Activated CD4-positive, alpha-beta memory T cell treated with anti-CD3 and anti-CD28 coated beads, Interleukin-2, amount 10 ng/mL, durations not matched to agents 7 days and 5 days (primary cell): ENCODE measurements at regions of chr16 and their contacts with region 1.

Region 1: DNA sequence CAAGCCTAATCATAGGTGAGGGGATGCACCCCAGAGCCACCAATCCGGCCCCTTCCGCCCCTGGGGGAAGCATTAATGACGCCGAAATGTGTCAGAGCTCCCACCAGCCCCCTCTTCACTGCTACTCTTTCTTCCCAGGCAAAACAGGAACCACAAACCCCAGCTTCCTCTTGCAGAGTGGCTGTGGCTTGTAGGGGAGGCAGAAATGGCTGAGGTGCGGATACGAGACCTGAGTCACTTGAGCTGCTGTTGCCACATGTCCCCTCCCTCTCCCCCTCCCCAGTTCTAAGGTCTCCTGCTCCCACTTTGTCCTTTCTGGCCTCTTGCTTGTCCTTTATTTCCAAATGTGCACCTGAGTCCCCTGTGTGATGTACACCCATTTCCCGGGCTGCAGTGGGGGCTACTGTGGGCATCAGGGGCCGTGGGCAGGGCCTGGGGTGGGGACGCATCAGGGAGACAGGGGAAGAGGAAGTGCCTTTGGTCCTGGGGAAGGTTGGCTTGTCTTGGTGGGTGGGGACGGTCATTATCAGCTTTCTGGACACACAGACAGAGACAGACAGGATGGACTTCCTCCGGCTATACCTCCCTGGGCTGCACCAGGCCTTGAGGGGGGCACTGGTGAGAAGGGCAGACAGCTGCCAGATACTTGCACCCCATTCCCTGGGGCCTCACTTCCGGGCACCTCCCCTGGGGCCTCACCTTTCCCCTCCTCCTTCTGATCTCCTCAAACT is at the start of gene APOBR:
- DNase-seq: peak; percentile 92
- H3K4me3 Mint-ChIP-seq: peak within 1 kb of the TSS; percentile 97
- H3K27ac Mint-ChIP-seq: peak within 1 kb of the TSS; percentile 98
- H3K4me1 Mint-ChIP-seq: peaks cover 63% of the 10 kb centered on the region
- H3K27me3 Mint-ChIP-seq: no peaks in the 10 kb centered on the region
- total RNA-seq, gene APOBR: 20.9 TPM

Region 2: DNA sequence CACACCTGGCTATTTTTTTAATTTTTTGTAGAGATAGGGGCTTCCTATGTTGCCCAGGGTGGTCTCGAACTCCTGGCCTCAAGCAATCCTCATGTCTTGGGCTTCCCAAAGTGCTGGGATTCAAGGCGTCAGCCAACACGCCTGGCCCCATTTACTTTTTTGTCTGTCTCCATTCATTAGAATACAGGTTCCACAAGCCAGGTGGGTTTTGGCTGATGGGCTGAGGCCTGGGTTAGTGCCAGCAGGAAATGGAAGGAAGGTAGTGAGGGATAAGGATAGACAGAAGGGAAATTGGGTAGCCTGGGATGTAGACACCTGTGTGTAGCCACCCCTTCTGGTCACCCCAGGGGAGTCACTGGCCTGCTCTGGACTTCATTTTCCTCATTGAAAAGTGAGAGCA is 16.7 kb after region 1 on chr16:
- CTCF ChIA-PET with region 1: no interaction called
- POLR2A ChIA-PET with region 1: no interaction called
- DNase-seq: no peak
- H3K4me3 Mint-ChIP-seq: no peak overlapping the region
- H3K27ac Mint-ChIP-seq: no peak overlapping the region
- H3K4me1 Mint-ChIP-seq: peaks cover 18% of the 10 kb centered on the region
- H3K27me3 Mint-ChIP-seq: peaks cover 8% of the 10 kb centered on the region

Region 3: DNA sequence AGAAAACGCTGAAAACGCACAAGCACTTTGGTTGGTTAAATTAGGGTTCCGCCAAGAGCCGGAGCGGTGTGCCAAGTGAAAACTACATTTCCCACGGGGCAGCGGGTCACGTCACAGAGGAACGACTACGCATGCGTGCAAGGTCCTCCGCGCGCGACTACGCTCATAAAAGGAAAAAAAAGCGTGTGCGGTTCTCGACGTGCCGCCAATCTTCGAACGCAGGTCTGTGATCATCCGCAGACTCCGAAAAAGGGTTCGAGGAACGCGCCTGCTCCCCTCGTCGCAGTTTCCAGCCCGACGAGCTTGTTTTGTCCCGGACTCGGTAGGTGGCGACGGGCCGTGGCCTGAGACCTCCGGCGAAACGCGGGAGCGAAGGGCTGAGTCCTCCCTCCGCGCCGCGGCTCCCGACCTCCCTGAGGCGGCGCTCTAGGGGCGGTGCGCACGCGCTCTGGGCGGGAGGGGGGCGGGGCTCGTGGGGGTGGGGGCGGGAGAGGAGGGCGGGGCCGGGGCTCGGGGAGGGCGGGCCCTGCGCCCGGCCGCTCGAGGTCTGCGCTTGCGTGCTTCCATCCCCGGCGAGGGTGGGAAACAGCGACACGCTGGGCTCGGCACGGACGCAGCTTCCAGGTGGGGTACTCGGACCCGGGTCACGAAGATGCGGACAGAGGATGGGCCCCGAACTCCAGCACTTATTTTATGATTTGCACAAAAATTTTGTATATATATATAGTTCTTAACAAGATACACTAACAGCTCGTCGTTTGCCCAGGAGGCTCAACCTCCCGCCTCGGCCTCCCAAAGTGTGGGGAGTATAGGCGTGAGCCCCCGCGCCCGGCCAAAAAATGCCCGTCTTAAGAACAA is 59.7 kb after region 1 on chr16 and contains the start of gene SGF29:
- CTCF ChIA-PET with region 1: interaction called, 4 read pairs
- POLR2A ChIA-PET with region 1: interaction called, 14 read pairs
- DNase-seq: peak; percentile 94
- H3K4me3 Mint-ChIP-seq: peak within 1 kb of the TSS; percentile 79
- H3K27ac Mint-ChIP-seq: peak within 1 kb of the TSS; percentile 95
- H3K4me1 Mint-ChIP-seq: peaks cover 24% of the 10 kb centered on the region
- H3K27me3 Mint-ChIP-seq: no peaks in the 10 kb centered on the region
- total RNA-seq, gene SGF29: 25.8 to 28.0 TPM

Region 4: DNA sequence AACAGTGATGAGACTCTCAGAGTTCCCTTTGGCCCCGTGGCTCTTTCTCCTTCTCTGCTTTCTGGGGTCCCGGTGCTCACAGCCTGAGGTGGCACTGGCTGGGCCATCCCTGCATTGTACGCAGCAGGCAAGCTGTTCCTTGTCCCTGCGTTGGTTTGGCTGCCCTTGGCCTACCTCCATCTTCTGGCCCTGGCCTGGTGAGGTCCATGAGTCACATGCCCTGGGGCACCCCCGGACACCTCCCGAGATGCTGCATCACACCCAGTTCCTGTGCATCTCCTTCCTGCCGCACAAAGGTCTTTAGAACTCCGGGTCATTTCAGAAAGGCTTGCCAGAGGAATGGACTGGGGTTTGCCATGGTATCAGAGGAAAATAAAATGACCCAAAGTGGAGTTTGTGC is 93.1 kb after region 1 on chr16:
- CTCF ChIA-PET with region 1: no interaction called
- POLR2A ChIA-PET with region 1: no interaction called
- DNase-seq: no peak
- H3K4me3 Mint-ChIP-seq: no peak overlapping the region
- H3K27ac Mint-ChIP-seq: no peak overlapping the region
- H3K4me1 Mint-ChIP-seq: no peaks in the 10 kb centered on the region
- H3K27me3 Mint-ChIP-seq: no peaks in the 10 kb centered on the region